ENCODE measurements at regions of chr2 and their contacts with region 1.

Region 1: GRCh38 chr2:219104107-219105035 is 43.6 kb upstream of the IHH start:
- DNase-seq: no peak
- H3K4me3 Mint-ChIP-seq: no peak overlapping the region
- H3K27ac Mint-ChIP-seq: no peak overlapping the region
- H3K4me1 Mint-ChIP-seq: peaks cover 5% of the 10 kb centered on the region
- H3K27me3 Mint-ChIP-seq: no peaks in the 10 kb centered on the region

Region 2: DNA sequence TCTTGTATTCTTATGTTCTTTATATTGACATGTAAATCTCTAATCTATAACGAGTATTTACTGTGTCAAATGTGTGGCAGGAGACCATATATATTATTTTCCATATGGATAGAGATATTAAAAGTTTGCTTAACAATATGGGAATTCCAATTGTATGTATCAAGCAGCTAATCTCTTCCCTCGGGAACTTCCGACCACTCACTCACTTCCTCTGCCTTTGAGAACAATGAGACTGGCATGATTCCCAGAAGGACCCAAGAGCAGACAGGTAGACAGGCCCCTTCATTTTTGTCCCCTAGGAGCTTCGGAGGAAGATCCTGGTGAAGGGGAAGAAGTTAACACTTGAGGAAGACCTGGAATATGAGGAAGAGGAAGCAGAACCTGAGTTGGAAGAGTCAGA is 472.5 kb before region 1 on chr2:
- CTCF ChIA-PET with region 1: no interaction called
- POLR2A ChIA-PET with region 1: no interaction called
- DNase-seq: no peak
- H3K4me3 Mint-ChIP-seq: no peak overlapping the region
- H3K27ac Mint-ChIP-seq: no peak overlapping the region
- H3K4me1 Mint-ChIP-seq: peaks cover 10% of the 10 kb centered on the region
- H3K27me3 Mint-ChIP-seq: no peaks in the 10 kb centered on the region

Region 3: DNA sequence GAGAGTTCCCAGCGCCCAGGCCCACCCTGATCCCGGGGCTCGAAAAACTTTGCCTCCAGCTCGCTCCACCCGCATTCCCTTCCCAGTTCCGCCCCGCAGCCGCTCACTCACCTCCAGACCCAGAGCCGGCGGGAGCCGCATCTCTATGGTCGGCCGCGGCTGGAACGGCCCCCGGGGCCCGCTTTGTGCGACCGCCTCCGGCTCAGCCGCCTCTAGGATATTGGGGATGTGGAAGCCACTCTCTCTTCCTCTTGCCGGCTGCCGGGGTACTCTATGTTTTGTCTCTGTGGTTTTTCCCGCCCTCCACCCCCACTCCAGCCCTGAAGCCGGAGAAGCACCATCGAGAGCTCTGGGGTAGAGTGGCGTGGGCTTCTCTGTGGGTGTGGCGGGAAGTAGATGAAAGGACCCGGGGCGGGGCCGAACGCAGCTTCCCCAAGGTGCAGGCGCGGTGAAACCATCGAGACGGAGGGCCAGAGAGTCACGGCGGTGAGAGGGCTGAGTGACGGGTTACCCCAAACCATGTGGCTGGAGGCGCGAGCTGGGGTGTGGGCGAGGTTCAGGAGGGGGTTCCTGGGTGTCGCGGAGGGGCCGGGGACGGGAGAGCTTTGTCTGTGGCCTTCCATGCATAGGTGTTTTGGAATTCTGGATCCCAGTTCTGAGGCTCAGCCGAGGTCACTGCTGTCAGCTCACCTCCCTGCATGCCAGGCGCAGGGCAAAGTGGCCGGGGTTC is 444.9 kb before region 1 on chr2 and contains the starts of genes BCS1L and ZNF142:
- CTCF ChIA-PET with region 1: no interaction called
- POLR2A ChIA-PET with region 1: no interaction called
- DNase-seq: peak; percentile 95
- H3K4me3 Mint-ChIP-seq: peak within 1 kb of the TSS; percentile 97
- H3K27ac Mint-ChIP-seq: peak within 1 kb of the TSS; percentile 84
- H3K4me1 Mint-ChIP-seq: peaks cover 43% of the 10 kb centered on the region
- H3K27me3 Mint-ChIP-seq: no peaks in the 10 kb centered on the region
- total RNA-seq, gene BCS1L: 35.0 to 39.8 TPM
- total RNA-seq, gene ZNF142: 41.4 to 41.8 TPM

Region 4: GRCh38 chr2:218986148-218986761 is 118.1 kb before region 1 on chr2:
- CTCF ChIA-PET with region 1: no interaction called
- POLR2A ChIA-PET with region 1: no interaction called
- DNase-seq: no peak
- H3K4me3 Mint-ChIP-seq: no peak overlapping the region
- H3K27ac Mint-ChIP-seq: no peak overlapping the region
- H3K4me1 Mint-ChIP-seq: peaks cover 8% of the 10 kb centered on the region
- H3K27me3 Mint-ChIP-seq: peaks cover 84% of the 10 kb centered on the region

Region 5: GRCh38 chr2:219029829-219030165 is 74.6 kb before region 1 on chr2:
- CTCF ChIA-PET with region 1: interaction called, 12 read pairs
- POLR2A ChIA-PET with region 1: no interaction called
- DNase-seq: peak; percentile 76
- H3K4me3 Mint-ChIP-seq: no peak overlapping the region
- H3K27ac Mint-ChIP-seq: no peak overlapping the region
- H3K4me1 Mint-ChIP-seq: no peaks in the 10 kb centered on the region
- H3K27me3 Mint-ChIP-seq: peaks cover 23% of the 10 kb centered on the region

Region 6: GRCh38 chr2:219057709-219058540 is 46.4 kb before region 1 on chr2:
- CTCF ChIA-PET with region 1: interaction called, 30 read pairs
- POLR2A ChIA-PET with region 1: no interaction called
- DNase-seq: peak; percentile 78
- H3K4me3 Mint-ChIP-seq: no peak overlapping the region
- H3K27ac Mint-ChIP-seq: no peak overlapping the region
- H3K4me1 Mint-ChIP-seq: peaks cover 18% of the 10 kb centered on the region
- H3K27me3 Mint-ChIP-seq: peaks cover 63% of the 10 kb centered on the region

Region 7: GRCh38 chr2:219073413-219074129 is 30.8 kb before region 1 on chr2:
- CTCF ChIA-PET with region 1: interaction called, 19 read pairs
- POLR2A ChIA-PET with region 1: no interaction called
- DNase-seq: no peak
- H3K4me3 Mint-ChIP-seq: no peak overlapping the region
- H3K27ac Mint-ChIP-seq: no peak overlapping the region
- H3K4me1 Mint-ChIP-seq: no peaks in the 10 kb centered on the region
- H3K27me3 Mint-ChIP-seq: no peaks in the 10 kb centered on the region

Region 8: DNA sequence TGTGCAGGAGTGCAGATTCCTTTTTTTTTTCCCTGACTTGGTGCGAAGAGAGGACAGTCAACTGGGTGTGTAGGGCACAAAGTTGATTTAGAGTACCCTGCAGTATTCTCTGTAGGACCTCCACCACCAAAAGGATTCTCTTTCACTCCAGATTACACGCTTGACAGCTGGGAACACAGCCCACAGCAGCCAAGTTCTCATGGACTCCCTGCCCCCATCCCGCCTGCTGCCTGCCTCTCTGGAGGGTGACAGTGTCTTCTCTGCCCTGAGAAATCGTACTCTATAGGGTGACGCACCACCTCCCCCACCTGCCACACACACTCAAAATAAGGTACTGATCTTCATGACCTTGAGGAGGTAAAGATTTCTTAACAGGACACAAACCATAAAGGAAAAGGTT is 17.0 kb before region 1 on chr2:
- CTCF ChIA-PET with region 1: interaction called, 21 read pairs
- POLR2A ChIA-PET with region 1: no interaction called
- DNase-seq: no peak
- H3K4me3 Mint-ChIP-seq: no peak overlapping the region
- H3K27ac Mint-ChIP-seq: no peak overlapping the region
- H3K4me1 Mint-ChIP-seq: peaks cover 7% of the 10 kb centered on the region
- H3K27me3 Mint-ChIP-seq: no peaks in the 10 kb centered on the region

Measured in activated CD4-positive, alpha-beta memory T cell treated with anti-CD3 and anti-CD28 coated beads, Interleukin-2, amount 10 ng/mL, durations not matched to agents 7 days and 5 days (primary cell).